A673 (cell line): ENCODE measurements at regions of chr6 and their contacts with region 1.

Region 1: DNA sequence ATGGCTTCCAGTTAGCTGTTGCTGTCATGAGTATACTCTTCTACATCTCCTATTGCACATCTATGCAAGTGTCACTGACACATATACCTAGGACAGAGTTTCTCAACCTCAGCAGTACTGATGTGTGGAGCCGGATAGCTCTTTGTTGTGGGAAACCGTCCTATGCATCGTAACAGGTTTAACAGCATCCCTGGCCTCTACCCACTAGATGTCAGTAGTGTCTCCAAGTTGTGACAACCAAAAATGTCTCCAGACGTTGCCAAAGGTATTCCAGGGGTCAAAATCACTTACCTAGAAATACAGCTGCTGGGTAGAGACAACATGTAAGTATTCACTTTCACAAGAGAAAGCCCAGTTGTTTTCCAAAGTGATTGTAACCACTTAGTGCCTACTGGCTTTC is 637.6 kb downstream of the RNF144B start:
- DNase-seq: peak; percentile 70
- H3K4me3 ChIP-seq: no peak overlapping the region
- H3K27ac ChIP-seq: no peak overlapping the region
- H3K4me1 ChIP-seq: no peaks in the 10 kb centered on the region
- H3K27me3 ChIP-seq: no peaks in the 10 kb centered on the region
- CTCF ChIP-seq: peak; percentile 71

Region 2: DNA sequence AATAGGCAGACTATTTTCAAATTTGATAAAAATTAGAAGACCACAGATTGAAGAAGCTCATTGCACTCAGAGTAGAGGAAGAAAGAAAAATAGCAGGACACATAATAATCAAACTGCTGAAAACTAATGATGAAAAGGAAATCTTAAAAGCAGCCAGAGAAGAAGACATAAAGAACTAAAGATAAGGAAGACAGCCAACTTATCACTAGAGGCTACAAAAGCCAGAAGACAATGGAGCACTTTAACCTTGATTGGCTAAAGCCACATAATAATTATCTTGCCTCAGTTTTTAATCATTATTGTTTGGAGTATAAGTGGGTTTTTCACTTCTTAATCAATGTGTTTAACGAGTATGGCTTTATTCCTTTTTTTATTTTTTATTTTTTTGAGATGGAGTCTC is 239.9 kb before region 1 on chr6:
- CTCF ChIA-PET with region 1: no interaction called
- POLR2A ChIA-PET with region 1: no interaction called
- intact Hi-C with region 1: no loop called
- DNase-seq: no peak
- H3K4me3 ChIP-seq: no peak overlapping the region
- H3K27ac ChIP-seq: no peak overlapping the region
- H3K4me1 ChIP-seq: no peaks in the 10 kb centered on the region
- H3K27me3 ChIP-seq: no peaks in the 10 kb centered on the region
- CTCF ChIP-seq: no peak

Region 3: DNA sequence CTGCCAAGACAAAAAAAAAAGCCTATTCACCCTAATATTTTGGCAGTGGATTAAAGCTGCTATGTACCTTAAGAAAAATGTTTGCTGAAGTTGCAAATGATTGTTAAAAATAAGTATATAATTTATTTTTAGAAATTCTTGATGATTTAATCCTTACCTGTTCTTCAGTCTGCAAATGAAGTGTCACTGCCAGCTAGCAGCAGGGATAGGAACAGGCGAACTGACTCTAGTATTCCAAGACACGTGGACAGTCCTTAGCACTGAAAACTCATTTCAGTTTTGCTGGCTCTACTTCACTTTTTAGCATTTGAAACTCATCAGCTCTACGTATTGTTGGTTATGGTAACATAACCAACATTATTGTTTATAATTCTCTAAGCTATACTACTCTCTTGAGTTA is 608.0 kb after region 1 on chr6:
- CTCF ChIA-PET with region 1: no interaction called
- POLR2A ChIA-PET with region 1: no interaction called
- intact Hi-C with region 1: loop called (anchors 10 kb)
- DNase-seq: no peak
- H3K4me3 ChIP-seq: no peak overlapping the region
- H3K27ac ChIP-seq: no peak overlapping the region
- H3K4me1 ChIP-seq: peaks cover 34% of the 10 kb centered on the region
- H3K27me3 ChIP-seq: no peaks in the 10 kb centered on the region
- CTCF ChIP-seq: no peak